ENCODE measurements at regions of chr5 and their contacts with region 1.

Region 1: DNA sequence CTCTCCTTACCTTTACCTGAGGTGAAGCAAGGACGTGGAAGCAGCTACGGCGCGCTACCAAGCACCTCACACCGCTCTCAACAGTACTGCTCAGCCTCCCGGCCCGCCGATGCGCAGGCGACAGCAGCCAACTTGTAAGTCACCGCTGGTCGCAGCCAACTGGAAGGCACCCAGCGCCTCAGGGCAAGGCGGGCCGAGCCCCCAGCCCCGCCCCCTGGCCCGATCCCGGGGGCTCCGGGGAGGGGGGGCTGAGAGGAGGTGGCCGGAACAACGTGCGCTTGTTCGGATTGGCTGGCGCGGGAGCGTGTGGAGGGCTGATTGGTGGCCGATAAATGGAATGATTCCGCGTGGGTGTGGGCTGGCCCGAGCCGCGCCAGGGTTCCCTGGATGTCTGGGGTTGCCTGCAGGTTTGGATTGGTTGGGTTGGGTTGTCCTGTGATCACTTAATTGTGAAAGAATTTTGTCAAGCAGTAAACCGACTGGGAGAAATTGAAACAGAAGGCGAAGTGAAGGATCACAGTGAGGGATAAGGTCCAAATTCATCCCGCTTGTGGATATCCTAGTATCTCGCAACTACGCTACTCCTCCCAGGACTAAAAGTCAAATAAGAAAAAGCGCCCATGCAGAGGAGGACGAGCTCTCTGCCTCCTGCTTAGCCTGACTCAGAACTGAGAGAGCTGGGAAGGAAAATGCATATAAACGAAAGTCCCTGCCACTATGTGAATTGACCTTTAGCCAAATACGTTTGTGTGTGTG is at the start of gene STARD4:
- DNase-seq: peak; percentile 97
- H3K4me3 ChIP-seq: peak within 1 kb of the TSS; percentile 72 to 97 (median 81)
- H3K27ac ChIP-seq: peak within 1 kb of the TSS; percentile 95
- H3K4me1 ChIP-seq: peaks cover 30% of the 10 kb centered on the region
- H3K27me3 ChIP-seq: no peaks in the 10 kb centered on the region
- CTCF ChIP-seq: no peak
- POLR2A ChIP-seq: peak; percentile 61
- total RNA-seq, gene STARD4: 77.1 and 87.8 TPM in 2 replicates

Region 2: DNA sequence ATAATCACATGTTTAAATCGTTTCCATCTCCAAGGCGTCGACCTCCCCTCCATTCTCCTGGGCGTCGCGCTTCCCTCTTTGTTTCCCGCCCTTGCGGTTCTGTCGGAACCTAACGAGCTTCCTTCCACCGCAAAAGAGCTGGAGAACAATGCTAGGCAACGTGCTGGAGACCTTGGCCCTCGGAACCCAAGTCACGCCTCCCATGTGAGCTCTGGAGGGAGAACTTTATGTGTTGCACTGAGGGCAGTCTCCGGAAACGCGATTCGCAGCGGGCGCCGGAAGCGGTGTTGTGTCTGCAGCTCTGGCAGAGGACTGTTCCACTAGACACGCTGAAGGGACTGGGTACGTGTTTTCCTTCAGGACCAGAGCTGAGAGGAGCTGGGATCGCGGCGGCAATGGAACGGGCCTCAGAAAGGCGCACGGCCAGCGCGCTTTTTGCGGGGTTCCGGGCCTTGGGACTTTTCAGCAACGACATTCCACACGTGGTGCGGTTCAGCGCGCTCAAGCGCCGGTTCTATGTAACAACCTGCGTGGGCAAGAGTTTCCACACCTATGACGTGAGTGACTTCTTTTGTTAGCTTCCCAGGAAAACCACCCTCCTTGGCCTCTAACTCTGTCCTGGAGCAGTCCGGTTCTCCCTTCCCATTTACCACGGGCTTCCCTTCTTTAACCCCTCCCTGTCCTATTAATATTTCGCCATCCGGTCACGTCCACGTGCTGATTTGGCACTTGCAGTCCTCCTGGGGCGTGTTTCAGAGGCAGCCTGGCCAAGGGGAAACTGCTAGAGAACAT is 420.3 kb before region 1 on chr5 and contains the start of gene WDR36:
- CTCF ChIA-PET with region 1: no interaction called
- POLR2A ChIA-PET with region 1: no interaction called
- dilution Hi-C with region 1: no loop called
- intact Hi-C with region 1: loop called (anchors 5 kb)
- DNase-seq: peak; percentile 91
- H3K4me3 ChIP-seq: peak within 1 kb of the TSS; percentile 25 to 95 (median 95)
- H3K27ac ChIP-seq: peak within 1 kb of the TSS; percentile 46
- H3K4me1 ChIP-seq: peaks cover 18% of the 10 kb centered on the region
- H3K27me3 ChIP-seq: no peaks in the 10 kb centered on the region
- CTCF ChIP-seq: no peak
- POLR2A ChIP-seq: peak; percentile 58
- total RNA-seq, gene WDR36: 30.2 and 33.8 TPM in 2 replicates

Region 3: DNA sequence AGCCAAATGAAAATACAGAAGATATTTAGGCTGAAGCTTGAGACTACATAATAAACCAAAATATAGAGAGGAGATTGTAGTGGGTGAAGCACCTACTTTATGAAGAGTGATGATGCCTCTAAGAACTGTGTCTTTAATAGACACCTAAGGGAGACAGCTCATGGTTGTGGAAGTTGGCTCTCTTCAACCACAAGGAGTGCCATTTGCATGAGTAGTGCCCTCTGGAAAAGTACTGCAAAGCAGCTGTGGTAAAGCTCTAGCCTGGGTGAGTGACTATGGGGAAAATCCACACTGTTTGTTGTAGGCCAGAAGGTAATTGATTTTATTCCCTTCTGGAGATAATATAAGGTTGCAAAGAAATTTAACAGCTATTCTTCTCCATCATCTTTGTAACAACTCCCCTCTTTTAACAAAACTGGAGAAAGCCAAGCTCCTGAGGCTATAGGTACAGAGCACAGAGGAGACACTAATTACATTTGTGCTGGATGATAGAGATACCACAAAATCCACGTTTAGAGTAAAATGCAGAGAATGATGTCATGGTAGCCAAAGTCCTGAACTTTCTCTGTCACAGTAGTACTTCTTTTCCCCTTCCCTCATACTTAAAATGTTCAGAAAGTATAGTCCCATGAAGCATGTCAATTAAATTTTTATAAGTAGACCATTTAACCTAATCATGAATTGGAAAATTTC is 123.0 kb before region 1 on chr5:
- CTCF ChIA-PET with region 1: no interaction called
- POLR2A ChIA-PET with region 1: no interaction called
- dilution Hi-C with region 1: no loop called
- intact Hi-C with region 1: no loop called
- DNase-seq: no peak
- H3K4me3 ChIP-seq: no peak overlapping the region
- H3K27ac ChIP-seq: no peak overlapping the region
- H3K4me1 ChIP-seq: no peaks in the 10 kb centered on the region
- H3K27me3 ChIP-seq: no peaks in the 10 kb centered on the region
- CTCF ChIP-seq: no peak
- POLR2A ChIP-seq: no peak

Region 4: GRCh38 chr5:111582993-111583601 is 70.5 kb after region 1 on chr5:
- CTCF ChIA-PET with region 1: no interaction called
- POLR2A ChIA-PET with region 1: no interaction called
- dilution Hi-C with region 1: no loop called
- intact Hi-C with region 1: no loop called
- DNase-seq: no peak
- H3K4me3 ChIP-seq: no peak overlapping the region
- H3K27ac ChIP-seq: no peak overlapping the region
- H3K4me1 ChIP-seq: peaks cover 29% of the 10 kb centered on the region
- H3K27me3 ChIP-seq: no peaks in the 10 kb centered on the region
- CTCF ChIP-seq: no peak
- POLR2A ChIP-seq: no peak

Region 5: GRCh38 chr5:111680737-111681413 is 168.3 kb after region 1 on chr5:
- CTCF ChIA-PET with region 1: no interaction called
- POLR2A ChIA-PET with region 1: no interaction called
- dilution Hi-C with region 1: no loop called
- intact Hi-C with region 1: loop called (anchors 2 kb)
- DNase-seq: peak; percentile 99
- H3K4me3 ChIP-seq: peak overlapping the region in 1 of 3 experiments; percentile 13
- H3K27ac ChIP-seq: peak overlapping the region; percentile 94
- H3K4me1 ChIP-seq: peaks cover 27% of the 10 kb centered on the region
- H3K27me3 ChIP-seq: no peaks in the 10 kb centered on the region
- CTCF ChIP-seq: no peak
- POLR2A ChIP-seq: no peak

Region 6: GRCh38 chr5:112160652-112161391 is 648.3 kb after region 1 on chr5:
- CTCF ChIA-PET with region 1: interaction called, 3 read pairs
- POLR2A ChIA-PET with region 1: interaction called, 3 read pairs
- dilution Hi-C with region 1: no loop called
- intact Hi-C with region 1: loop called (anchors 1 kb)
- DNase-seq: peak; percentile 92
- H3K4me3 ChIP-seq: peak overlapping the region; percentile 90 to 100 (median 92)
- H3K27ac ChIP-seq: peak overlapping the region; percentile 72
- H3K4me1 ChIP-seq: peaks cover 17% of the 10 kb centered on the region
- H3K27me3 ChIP-seq: peaks cover 0 to 4% of the 10 kb centered on the region in 2 experiments
- CTCF ChIP-seq: peak; percentile 99
- POLR2A ChIP-seq: peak; percentile 98

Region 7: GRCh38 chr5:112329419-112330090 is 817.0 kb after region 1 on chr5:
- CTCF ChIA-PET with region 1: no interaction called
- POLR2A ChIA-PET with region 1: no interaction called
- dilution Hi-C with region 1: no loop called
- intact Hi-C with region 1: loop called (anchors 10 kb)
- DNase-seq: peak; percentile 53
- H3K4me3 ChIP-seq: no peak overlapping the region
- H3K27ac ChIP-seq: peak overlapping the region; percentile 67
- H3K4me1 ChIP-seq: peaks cover 55% of the 10 kb centered on the region
- H3K27me3 ChIP-seq: no peaks in the 10 kb centered on the region
- CTCF ChIP-seq: no peak
- POLR2A ChIP-seq: no peak